Right lobe of liver (tissue), 6 donors: ENCODE measurements at regions of chr9 and their contacts with region 1.

Region 1: DNA sequence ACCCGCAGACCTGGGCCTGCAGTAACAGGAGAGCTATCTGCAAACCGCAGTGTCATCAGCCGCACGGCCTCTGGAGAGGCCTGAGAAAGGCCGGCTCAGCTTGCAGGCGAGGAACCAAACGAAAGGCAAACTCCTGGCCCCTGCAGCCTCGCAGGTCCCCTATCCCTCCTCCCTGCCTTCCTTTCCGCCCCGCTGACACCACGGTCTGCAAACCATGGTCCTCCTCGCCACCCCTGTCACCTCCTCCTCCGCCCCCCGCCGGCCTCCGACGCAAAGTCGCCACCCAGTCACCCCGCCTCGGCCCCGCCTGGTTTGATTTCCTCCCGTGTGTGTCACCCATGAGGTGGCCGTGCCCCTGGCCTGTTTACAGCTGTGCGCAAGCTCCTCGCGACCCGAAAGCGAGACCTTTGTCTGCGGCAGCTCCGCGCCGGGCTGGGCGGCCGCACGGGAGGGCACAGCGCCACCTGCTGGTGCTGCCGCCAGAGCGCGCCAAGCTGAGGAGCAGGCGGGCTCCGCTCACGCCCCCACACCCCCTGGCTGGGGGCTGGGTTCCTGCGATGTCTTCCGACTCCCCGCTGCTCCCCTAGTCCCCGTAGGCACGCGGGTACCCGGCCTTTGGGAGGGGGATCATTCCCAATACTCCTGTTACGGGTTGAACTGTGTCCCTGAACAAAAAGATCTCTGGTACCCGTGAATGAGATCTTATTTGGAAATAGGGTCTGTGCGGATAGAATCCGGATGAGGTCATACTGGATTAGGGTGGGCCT is 19.4 kb downstream of the GBGT1 start:
- DNase-seq: peak; percentile 72 to 90 (median 89)
- ATAC-seq: peak; percentile 66 to 72 (median 66)
- H3K4me3 ChIP-seq: peak overlapping the region; percentile 22 to 40 (median 38)
- H3K27ac ChIP-seq: peak overlapping the region; percentile 0 to 51 (median 2)
- H3K4me1 ChIP-seq: peaks cover 0 to 20% (median 8%) of the 10 kb centered on the region in 4 donors
- H3K27me3 ChIP-seq: no peaks in the 10 kb centered on the region
- CTCF ChIP-seq: peak; percentile 98 to 99 (median 99)
- POLR2A ChIP-seq: no peak

Region 2: GRCh38 chr9:133103183-133103986 is 40.9 kb before region 1 on chr9:
- intact Hi-C with region 1: loop called (anchors 5 kb)
- DNase-seq: peak; percentile 69 to 80 (median 70)
- ATAC-seq: peak; percentile 77 to 92 (median 84)
- H3K4me3 ChIP-seq: no peak overlapping the region
- H3K27ac ChIP-seq: no peak overlapping the region
- H3K4me1 ChIP-seq: no peaks in the 10 kb centered on the region
- H3K27me3 ChIP-seq: no peaks in the 10 kb centered on the region
- CTCF ChIP-seq: peak; percentile 96 to 98 (median 98)
- POLR2A ChIP-seq: no peak

Region 3: DNA sequence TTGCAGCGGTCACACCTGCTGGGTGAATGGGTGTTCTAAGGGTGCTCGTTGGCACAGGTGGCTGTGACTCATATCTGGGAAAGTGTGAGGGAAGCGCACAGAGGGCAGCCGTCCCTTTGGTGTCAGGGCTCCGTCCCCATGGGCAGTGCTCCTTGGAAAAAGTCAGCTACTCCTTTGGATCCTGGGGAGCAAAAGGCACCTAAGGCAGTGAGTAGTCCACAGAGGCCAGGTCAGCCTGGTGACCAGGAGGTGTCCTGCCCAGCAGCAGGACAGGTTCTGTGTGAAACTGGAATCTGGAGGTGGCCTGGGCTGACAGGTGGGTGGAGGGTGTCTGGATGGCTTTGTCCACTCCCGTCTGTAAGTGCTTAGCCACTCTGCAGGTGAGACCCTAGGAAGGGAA is 37.9 kb after region 1 on chr9:
- intact Hi-C with region 1: no loop called
- DNase-seq: no peak
- ATAC-seq: peak in 1 of 4 donors; percentile 18
- H3K4me3 ChIP-seq: no peak overlapping the region
- H3K27ac ChIP-seq: no peak overlapping the region
- H3K4me1 ChIP-seq: no peaks in the 10 kb centered on the region
- H3K27me3 ChIP-seq: no peaks in the 10 kb centered on the region
- CTCF ChIP-seq: no peak
- POLR2A ChIP-seq: no peak

Region 4: GRCh38 chr9:133429641-133430161 is 285.4 kb after region 1 on chr9:
- intact Hi-C with region 1: no loop called
- DNase-seq: no peak
- ATAC-seq: peak; percentile 9 to 34 (median 24)
- H3K4me3 ChIP-seq: no peak overlapping the region
- H3K27ac ChIP-seq: no peak overlapping the region
- H3K4me1 ChIP-seq: peaks cover 0 to 7% (median 0%) of the 10 kb centered on the region in 4 donors
- H3K27me3 ChIP-seq: no peaks in the 10 kb centered on the region
- CTCF ChIP-seq: no peak
- POLR2A ChIP-seq: no peak